A549 (cell line): ENCODE measurements at regions of chr17 and their contacts with region 1.

Region 1: DNA sequence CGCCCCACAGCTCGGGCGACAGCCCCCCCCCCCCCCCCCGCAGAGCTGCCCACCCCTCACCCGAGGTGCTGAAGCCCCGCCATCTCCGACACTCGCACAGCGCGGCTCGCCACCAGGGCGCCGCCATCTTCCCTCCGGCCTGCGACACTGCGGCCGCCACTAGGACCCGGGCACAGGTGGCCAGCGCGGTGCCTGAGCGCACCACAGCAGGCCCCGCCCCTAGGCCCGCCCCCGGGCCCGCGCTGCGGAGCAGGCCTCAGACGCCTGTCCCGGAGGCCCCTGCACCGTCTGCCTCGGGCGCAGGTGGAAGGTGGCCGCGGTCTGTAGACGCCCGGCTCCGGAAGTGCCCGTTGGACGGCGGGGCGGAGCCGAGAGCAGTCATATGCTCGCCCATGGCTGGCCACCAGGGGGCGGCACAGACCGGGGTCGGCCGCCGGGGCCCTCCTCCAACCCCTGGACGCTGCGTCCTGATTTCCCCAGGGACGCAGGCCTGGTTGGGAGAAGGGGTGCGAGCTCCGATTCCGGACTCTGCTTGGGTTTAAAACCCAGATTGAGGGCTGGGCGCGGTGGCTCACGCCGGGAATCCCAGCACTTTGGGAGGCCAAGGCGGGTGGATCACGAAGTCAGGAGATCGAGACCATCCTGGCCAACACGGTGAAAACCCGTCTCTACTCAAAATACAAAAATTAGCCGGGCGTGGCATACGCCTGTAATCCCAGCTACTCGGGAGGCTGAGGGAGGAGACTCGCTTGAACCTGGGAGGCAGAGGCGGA is at the start of gene MRPL38:
- DNase-seq: peak; percentile 97 to 98
- ATAC-seq: peak; percentile 96 to 97
- H3K4me3 ChIP-seq: peak within 1 kb of the TSS; percentile 87
- H3K27ac ChIP-seq: peak within 1 kb of the TSS; percentile 86 to 93
- H3K4me1 ChIP-seq: peaks cover 22% of the 10 kb centered on the region
- CTCF ChIP-seq: peak; percentile 99
- EP300 ChIP-seq: no peak
- POLR2A ChIP-seq: peak; percentile 92
- RAD21 ChIP-seq: peak; percentile 90 to 98
- polyA plus RNA-seq, gene MRPL38: 43.4 and 53.5 TPM in 2 replicates

Region 2: DNA sequence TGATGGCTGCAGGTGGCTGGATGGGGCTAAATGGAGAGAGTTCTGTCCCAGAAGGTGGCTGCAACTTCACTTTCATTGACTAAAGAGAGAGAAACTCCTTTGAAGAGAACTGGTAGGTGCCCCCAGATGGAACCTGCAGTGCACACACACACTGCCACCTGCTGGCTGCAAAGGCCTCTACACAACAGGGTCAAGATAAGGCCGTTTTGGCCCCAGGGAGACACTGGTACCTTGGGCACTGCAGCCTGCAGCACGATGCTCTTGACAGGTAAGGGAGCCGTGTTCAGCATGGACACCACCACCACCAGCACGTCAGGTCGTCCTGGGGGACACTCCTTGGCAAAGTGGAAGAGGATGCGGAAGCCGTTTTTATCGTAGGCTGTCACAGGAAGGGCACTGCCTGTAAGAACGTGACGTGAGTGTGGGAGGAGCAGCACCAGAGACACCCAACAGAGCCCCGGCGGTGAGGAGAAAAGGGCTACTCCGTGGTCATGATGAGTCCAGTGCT is 666.2 kb before region 1 on chr17:
- CTCF ChIA-PET with region 1: no interaction called
- POLR2A ChIA-PET with region 1: no interaction called
- DNase-seq: peak; percentile 89 to 96
- ATAC-seq: peak; percentile 71 to 84
- H3K4me3 ChIP-seq: no peak overlapping the region
- H3K27ac ChIP-seq: no peak overlapping the region
- H3K4me1 ChIP-seq: 0 out of 3 replicates have a peak, but pooled peaks cover 6% of the 10 kb centered on the region
- CTCF ChIP-seq: peak; percentile 92
- EP300 ChIP-seq: no peak
- POLR2A ChIP-seq: no peak
- RAD21 ChIP-seq: peak; percentile 57 to 64

Region 3: DNA sequence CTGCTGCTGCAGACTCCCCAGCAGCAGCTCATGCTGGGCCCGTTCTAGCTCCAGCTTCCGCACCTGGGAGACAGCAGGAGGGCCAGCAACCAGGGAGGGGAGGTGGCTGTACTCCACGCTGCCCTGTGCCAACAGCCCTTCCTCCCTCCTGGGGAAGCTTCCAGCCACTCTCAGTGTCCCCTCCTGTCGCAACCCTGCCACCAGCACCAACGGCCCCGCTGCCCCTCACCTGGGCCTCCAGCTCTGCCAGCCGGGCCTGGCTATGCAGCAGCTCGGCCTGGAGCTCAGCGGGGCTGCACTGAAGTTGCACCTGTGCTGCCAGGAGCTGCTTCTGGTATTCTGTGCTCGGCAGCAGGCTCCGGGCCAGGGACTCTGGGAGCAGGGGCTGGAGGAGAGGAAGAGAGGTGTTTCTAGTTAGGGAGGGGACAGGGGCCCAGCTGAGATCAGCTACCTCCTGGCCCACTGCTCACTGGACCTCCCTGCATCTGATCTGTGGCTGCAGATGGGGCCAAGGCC is 15.2 kb after region 1 on chr17:
- CTCF ChIA-PET with region 1: interaction called, 58 read pairs
- POLR2A ChIA-PET with region 1: interaction called, 3 read pairs
- DNase-seq: no peak
- ATAC-seq: peak in 1 of 2 experiments; percentile 14; a peak in 1 of 6 replicates
- H3K4me3 ChIP-seq: no peak overlapping the region
- H3K27ac ChIP-seq: no peak overlapping the region
- H3K4me1 ChIP-seq: no peaks in the 10 kb centered on the region
- CTCF ChIP-seq: no peak
- EP300 ChIP-seq: no peak
- POLR2A ChIP-seq: no peak
- RAD21 ChIP-seq: no peak

Region 4: GRCh38 chr17:75927286-75927922 is 22.5 kb after region 1 on chr17:
- CTCF ChIA-PET with region 1: interaction called, 37 read pairs
- POLR2A ChIA-PET with region 1: interaction called, 3 read pairs
- DNase-seq: peak; percentile 62 to 80
- ATAC-seq: peak; percentile 62 to 88; a peak in 5 of 6 replicates
- H3K4me3 ChIP-seq: no peak overlapping the region
- H3K27ac ChIP-seq: no peak overlapping the region
- H3K4me1 ChIP-seq: no peaks in the 10 kb centered on the region
- CTCF ChIP-seq: peak; percentile 32
- EP300 ChIP-seq: no peak
- POLR2A ChIP-seq: no peak
- RAD21 ChIP-seq: peak in 1 of 2 experiments; percentile 31; a peak in 2 of 5 replicates

Region 5: DNA sequence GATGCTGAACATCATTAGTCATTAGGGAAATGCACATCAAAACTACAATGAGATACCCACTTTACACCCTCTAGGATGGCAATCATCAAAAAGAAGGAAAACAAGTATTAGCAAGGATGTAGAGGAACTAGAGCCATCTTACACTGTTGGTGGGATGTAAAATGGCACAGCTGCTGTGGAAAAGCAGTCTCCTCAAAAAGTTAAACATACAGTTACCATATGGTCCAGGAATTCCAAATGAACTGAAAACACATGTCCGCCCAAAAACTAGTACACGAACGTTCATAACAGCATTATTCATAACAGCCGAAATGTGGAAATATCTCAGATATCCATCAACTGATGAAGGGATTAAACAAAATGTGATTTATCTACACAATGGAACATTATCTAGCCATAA is 28.9 kb after region 1 on chr17:
- CTCF ChIA-PET with region 1: interaction called, 37 read pairs
- POLR2A ChIA-PET with region 1: no interaction called
- DNase-seq: no peak
- ATAC-seq: no peak
- H3K4me3 ChIP-seq: no peak overlapping the region
- H3K27ac ChIP-seq: no peak overlapping the region
- H3K4me1 ChIP-seq: no peaks in the 10 kb centered on the region
- CTCF ChIP-seq: no peak
- EP300 ChIP-seq: no peak
- POLR2A ChIP-seq: no peak
- RAD21 ChIP-seq: no peak

Region 6: DNA sequence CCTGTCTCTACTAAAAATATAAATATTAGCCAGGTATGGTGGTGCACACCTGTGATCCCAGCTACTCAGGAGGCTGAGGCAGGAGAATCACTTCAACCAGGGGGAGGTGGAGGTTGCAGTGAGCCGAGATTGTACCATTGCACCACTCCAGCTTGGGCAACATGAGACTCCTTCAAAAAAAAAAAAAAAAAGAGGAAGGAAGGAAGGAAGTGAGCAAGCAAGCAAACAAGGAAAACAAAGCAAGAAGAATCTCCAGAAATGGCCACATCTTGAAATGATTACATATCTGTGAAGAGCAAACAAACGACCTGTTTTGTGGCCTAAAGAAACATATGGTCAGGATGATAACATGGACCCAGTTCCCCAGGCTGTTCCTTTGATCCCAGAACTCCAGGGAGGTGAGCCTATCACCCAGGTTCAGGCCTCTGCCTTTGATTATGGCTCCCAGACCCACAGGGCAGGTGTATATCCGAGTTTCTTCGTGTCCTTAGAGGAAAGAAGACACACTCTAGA is 65.1 kb after region 1 on chr17:
- CTCF ChIA-PET with region 1: interaction called, 10 read pairs
- POLR2A ChIA-PET with region 1: no interaction called
- DNase-seq: peak in 1 of 2 experiments; percentile 21
- ATAC-seq: no peak
- H3K4me3 ChIP-seq: no peak overlapping the region
- H3K27ac ChIP-seq: no peak overlapping the region
- H3K4me1 ChIP-seq: 0 out of 3 replicates have a peak, but pooled peaks cover 3% of the 10 kb centered on the region
- CTCF ChIP-seq: no peak
- EP300 ChIP-seq: no peak
- POLR2A ChIP-seq: no peak
- RAD21 ChIP-seq: no peak